Spleen (tissue), 13 donors: ENCODE measurements at regions of chr2 and their contacts with region 1.

Region 1: GRCh38 chr2:153519257-153519875 is 40.8 kb upstream of the RPRM start:
- DNase-seq: no peak
- H3K4me3 ChIP-seq: no peak overlapping the region
- H3K27ac ChIP-seq: no peak overlapping the region
- H3K4me1 ChIP-seq: no peaks in the 10 kb centered on the region
- H3K27me3 ChIP-seq: peaks cover 0 to 6% (median 0%) of the 10 kb centered on the region in 7 donors
- CTCF ChIP-seq: peak in 10 of 11 experiments; percentile 32 to 74 (median 62)
- POLR2A ChIP-seq: no peak

Region 2: GRCh38 chr2:152036611-152037469 is 1482.5 kb before region 1 on chr2:
- intact Hi-C with region 1: loop called (anchors 10 kb)
- DNase-seq: no peak
- H3K4me3 ChIP-seq: no peak overlapping the region
- H3K27ac ChIP-seq: no peak overlapping the region
- H3K4me1 ChIP-seq: peaks cover 3 to 26% (median 14%) of the 10 kb centered on the region in 6 donors
- H3K27me3 ChIP-seq: no peaks in the 10 kb centered on the region
- CTCF ChIP-seq: peak in 10 of 11 experiments; percentile 30 to 79 (median 67)
- POLR2A ChIP-seq: no peak

Region 3: DNA sequence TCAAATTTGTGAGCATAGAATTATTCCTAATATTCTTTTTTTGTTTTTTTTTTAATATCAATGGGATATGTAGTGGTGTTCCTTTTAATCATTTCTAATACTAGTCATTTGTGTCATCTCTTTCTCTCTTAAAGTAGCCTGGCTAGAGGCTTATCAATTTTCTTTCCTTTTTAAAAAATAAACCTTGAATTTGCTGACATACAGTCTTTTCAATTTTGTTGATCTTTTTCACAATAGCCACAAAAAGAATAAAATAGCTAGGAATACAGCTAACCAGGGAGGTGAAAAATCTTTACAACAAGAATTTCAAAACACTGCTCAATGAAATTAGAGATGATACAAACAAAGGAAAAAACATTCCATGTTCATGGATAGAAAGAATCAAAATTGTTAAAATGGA is 608.4 kb before region 1 on chr2:
- intact Hi-C with region 1: no loop called
- DNase-seq: no peak
- H3K4me3 ChIP-seq: no peak overlapping the region
- H3K27ac ChIP-seq: no peak overlapping the region
- H3K4me1 ChIP-seq: no peaks in the 10 kb centered on the region
- H3K27me3 ChIP-seq: no peaks in the 10 kb centered on the region
- CTCF ChIP-seq: no peak
- POLR2A ChIP-seq: no peak